Heart right ventricle (tissue), 16 donors: ENCODE measurements at regions of chr12 and their contacts with region 1.

Region 1: DNA sequence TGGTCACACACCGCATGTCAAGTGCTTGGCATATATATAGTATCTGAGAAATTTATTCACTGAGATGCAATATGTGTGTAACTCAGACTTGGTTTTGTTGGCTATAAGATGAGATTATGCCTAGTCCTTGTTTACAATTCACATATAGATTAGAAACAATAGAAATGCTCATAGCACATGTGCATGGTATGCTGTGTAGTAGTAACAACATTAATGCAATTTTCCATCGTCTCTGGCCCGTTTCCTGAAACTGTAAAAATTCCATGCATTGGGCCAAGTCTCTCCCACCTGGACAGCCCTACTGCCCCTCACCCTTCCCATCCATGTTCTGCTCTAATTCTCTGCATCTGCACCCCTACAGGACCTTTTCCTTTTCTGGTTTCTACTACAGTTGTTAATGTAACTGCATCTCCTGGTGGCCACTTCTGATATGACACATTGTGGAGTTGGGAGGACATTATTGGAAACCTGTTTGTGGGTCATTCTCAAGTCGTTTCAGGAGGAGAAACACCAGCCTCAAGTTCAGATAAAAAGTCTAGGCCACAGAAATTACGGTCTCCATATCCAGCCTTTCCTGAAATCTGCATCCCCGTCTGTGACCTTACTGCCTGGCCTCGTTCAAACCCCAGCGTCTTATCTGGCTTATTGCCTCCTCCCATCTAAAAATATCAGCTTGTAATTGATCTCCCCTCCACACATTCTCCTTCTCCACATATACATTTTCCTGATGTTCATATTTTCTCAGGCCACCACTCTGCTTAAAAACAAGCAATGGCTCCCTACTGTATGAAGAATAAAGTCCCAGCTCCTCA is 37.5 kb downstream of the EMP1 start:
- DNase-seq: peak in 1 of 2 donors; percentile 67
- ATAC-seq: peak in 6 of 8 donors; percentile 47 to 75 (median 64)
- H3K4me3 ChIP-seq: no peak overlapping the region
- H3K27ac ChIP-seq: no peak overlapping the region
- H3K4me1 ChIP-seq: peaks cover 0 to 8% (median 0%) of the 10 kb centered on the region in 9 donors
- H3K27me3 ChIP-seq: no peaks in the 10 kb centered on the region
- CTCF ChIP-seq: peak; percentile 51 to 85 (median 72)

Region 2: GRCh38 chr12:12890815-12891645 is 343.0 kb before region 1 on chr12 and contains the start of gene GPRC5A:
- intact Hi-C with region 1: no loop called
- DNase-seq: peak; percentile 74 to 78
- ATAC-seq: peak; percentile 87 to 94 (median 90)
- H3K4me3 ChIP-seq: peak within 1 kb of the TSS; percentile 21 to 63 (median 56)
- H3K27ac ChIP-seq: peak within 1 kb of the TSS in 8 of 10 donors; percentile 10 to 69 (median 40)
- H3K4me1 ChIP-seq: peaks cover 0 to 19% (median 12%) of the 10 kb centered on the region in 9 donors
- H3K27me3 ChIP-seq: peaks cover 0 to 49% (median 31%) of the 10 kb centered on the region in 7 donors
- CTCF ChIP-seq: peak in 1 of 9 donors; percentile 7
- total RNA-seq, gene GPRC5A: 0.26 to 4.5 (median 0.88) TPM

Region 3: DNA sequence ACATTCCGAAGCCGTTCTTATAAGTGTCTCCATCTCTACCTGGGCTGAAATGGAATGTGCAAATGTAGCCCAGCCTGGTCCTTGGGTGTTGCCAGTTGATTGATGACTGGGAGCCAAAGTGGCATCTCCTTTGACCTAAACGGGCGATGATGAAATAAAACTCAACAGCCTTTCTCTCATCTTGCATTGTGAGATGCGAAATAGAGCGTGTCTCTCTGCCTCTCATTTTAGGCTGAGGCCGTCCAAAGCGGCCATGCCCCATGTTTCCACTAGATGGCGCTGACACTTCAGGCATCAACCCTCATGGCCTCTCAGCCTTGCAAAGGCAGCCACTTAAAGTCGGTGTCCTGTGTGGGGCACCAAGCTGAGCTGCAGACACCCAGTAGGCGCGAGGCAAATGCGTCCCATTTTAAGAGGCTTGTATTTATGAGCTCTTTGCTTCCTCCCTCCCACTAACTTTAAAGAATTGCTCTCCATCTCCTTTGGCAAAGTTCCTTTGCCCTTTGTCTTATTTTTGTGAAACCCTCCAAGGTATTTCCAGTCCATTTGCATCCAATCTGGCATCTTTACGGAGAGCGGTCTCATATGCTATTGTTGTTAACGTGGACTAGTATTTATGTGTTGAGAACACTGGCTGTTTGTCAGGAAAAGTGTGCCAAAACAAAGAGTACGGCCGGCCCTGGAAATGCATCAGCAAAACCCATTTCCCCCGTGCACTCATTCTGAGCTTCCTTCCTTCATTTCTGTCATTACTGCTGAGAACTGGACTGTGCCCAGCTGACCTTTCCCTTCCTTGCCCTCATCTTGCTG is 317.7 kb before region 1 on chr12:
- intact Hi-C with region 1: loop called in 9 of 10 experiments (anchors 1 to 10 kb)
- DNase-seq: peak; percentile 85 to 87
- ATAC-seq: peak; percentile 87 to 97 (median 95)
- H3K4me3 ChIP-seq: peak overlapping the region in 5 of 10 donors; percentile 16 to 32 (median 19)
- H3K27ac ChIP-seq: peak overlapping the region in 8 of 10 donors; percentile 12 to 51 (median 35)
- H3K4me1 ChIP-seq: peaks cover 0 to 19% (median 8%) of the 10 kb centered on the region in 9 donors
- H3K27me3 ChIP-seq: peaks cover 0 to 3% (median 0%) of the 10 kb centered on the region in 7 donors
- CTCF ChIP-seq: peak; percentile 94 to 99 (median 98)

Region 4: GRCh38 chr12:13023811-13024530 is 210.1 kb before region 1 on chr12:
- intact Hi-C with region 1: loop called in 3 of 10 experiments (anchors 2 to 10 kb)
- DNase-seq: peak in 1 of 2 donors; percentile 15
- ATAC-seq: peak in 4 of 8 donors; percentile 67 to 84 (median 72)
- H3K4me3 ChIP-seq: no peak overlapping the region
- H3K27ac ChIP-seq: no peak overlapping the region
- H3K4me1 ChIP-seq: peaks cover 0 to 13% (median 0%) of the 10 kb centered on the region in 9 donors
- H3K27me3 ChIP-seq: peaks cover 0 to 3% (median 0%) of the 10 kb centered on the region in 7 donors
- CTCF ChIP-seq: peak in 6 of 9 donors; percentile 18 to 67 (median 44)

Region 5: DNA sequence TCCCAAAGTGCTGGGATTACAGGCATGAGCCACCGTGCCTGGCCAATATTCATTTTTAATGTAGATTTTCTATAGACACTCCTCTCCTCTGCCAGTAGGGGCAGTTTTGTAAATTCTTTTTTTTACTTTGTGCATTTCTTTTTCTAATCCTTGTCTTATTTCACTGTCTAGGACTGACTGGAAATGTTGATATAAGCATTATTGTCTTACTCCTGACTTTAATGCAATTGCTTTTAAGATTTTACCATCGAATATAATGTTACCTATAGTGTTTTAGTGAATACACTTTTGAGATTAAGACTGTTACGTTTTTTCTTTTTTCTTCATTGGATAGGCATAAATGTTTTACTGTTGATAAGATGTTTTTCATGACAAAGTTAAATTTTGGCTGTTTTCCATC is 72.9 kb before region 1 on chr12:
- intact Hi-C with region 1: no loop called
- DNase-seq: no peak
- ATAC-seq: no peak
- H3K4me3 ChIP-seq: no peak overlapping the region
- H3K27ac ChIP-seq: no peak overlapping the region
- H3K4me1 ChIP-seq: peaks cover 0 to 14% (median 10%) of the 10 kb centered on the region in 9 donors
- H3K27me3 ChIP-seq: no peaks in the 10 kb centered on the region
- CTCF ChIP-seq: peak in 2 of 9 donors; percentile 16 to 19

Region 6: GRCh38 chr12:13383379-13383778 is 149.3 kb after region 1 on chr12:
- intact Hi-C with region 1: no loop called
- DNase-seq: no peak
- ATAC-seq: no peak
- H3K4me3 ChIP-seq: no peak overlapping the region
- H3K27ac ChIP-seq: no peak overlapping the region
- H3K4me1 ChIP-seq: no peaks in the 10 kb centered on the region
- H3K27me3 ChIP-seq: peaks cover 0 to 11% (median 0%) of the 10 kb centered on the region in 7 donors
- CTCF ChIP-seq: no peak